ENCODE measurements at regions of chr19 and their contacts with region 1.

Region 1: GRCh38 chr19:49113762-49114629 is at the start of gene LIN7B:
- DNase-seq: peak; percentile 84
- H3K4me3 ChIP-seq: peak within 1 kb of the TSS; percentile 78
- H3K27ac ChIP-seq: peak within 1 kb of the TSS; percentile 85
- H3K4me1 ChIP-seq: peaks cover 13% of the 10 kb centered on the region
- H3K27me3 ChIP-seq: no peaks in the 10 kb centered on the region
- CTCF ChIP-seq: peak; percentile 32; the same call in 1 of the 2 replicates
- total RNA-seq, gene LIN7B: 19.9 and 24.3 TPM in 2 replicates

Region 2: DNA sequence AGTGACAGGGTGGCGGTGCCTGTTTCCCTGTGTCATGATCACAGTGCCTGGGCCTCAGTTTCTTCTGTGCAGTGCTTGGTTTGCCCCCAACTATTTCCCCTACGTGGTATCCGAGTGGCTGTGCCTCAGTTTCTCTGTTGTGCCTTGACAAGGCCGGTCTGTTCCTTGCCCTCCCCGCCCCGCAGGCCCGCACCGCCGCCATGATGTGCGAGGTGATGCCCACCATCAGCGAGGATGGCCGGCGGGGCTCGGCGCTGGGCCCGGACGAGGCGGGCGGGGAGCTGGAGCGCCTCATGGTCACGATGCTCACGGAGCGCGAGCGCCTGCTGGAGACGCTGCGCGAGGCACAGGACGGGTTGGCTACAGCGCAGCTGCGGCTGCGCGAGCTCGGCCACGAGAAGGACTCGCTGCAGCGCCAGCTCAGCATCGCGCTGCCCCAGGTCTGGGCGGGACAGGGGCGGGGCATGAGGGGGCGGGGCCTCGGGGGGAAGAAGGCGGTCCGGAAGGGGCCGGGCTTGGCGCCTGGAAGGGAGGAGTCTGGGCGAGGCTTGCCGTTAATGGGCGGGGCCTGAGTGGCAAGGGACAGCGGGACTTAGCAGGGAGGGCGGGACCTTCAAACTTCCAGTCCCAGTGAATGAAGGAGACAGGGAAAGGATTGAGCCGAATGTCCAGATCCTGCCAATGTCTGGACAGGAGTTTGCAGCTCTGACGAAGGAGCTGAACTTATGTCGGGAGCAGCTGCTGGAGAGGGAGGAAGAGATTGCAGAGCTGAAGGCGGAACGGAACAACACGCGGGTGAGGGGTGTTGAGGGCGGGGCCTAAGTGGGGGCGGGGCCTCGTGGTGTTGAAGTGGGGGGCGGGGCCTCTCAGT is 13.9 kb after region 1 on chr19:
- CTCF ChIA-PET with region 1: interaction called, 12 read pairs
- POLR2A ChIA-PET with region 1: no interaction called
- intact Hi-C with region 1: no loop called
- DNase-seq: peak; percentile 98
- H3K4me3 ChIP-seq: peak overlapping the region; percentile 49
- H3K27ac ChIP-seq: no peak overlapping the region
- H3K4me1 ChIP-seq: peaks cover 18% of the 10 kb centered on the region
- H3K27me3 ChIP-seq: no peaks in the 10 kb centered on the region
- CTCF ChIP-seq: no peak

Region 3: GRCh38 chr19:49210108-49210900 is 96.3 kb after region 1 on chr19:
- CTCF ChIA-PET with region 1: interaction called, 3 read pairs
- POLR2A ChIA-PET with region 1: no interaction called
- intact Hi-C with region 1: loop called (anchors 5 kb)
- DNase-seq: peak; percentile 96
- H3K4me3 ChIP-seq: peak overlapping the region; percentile 67
- H3K27ac ChIP-seq: peak overlapping the region; percentile 99
- H3K4me1 ChIP-seq: peaks cover 32% of the 10 kb centered on the region
- H3K27me3 ChIP-seq: no peaks in the 10 kb centered on the region
- CTCF ChIP-seq: 0 out of 2 replicates have a peak, but pooled peaks have one; percentile 12

Region 4: DNA sequence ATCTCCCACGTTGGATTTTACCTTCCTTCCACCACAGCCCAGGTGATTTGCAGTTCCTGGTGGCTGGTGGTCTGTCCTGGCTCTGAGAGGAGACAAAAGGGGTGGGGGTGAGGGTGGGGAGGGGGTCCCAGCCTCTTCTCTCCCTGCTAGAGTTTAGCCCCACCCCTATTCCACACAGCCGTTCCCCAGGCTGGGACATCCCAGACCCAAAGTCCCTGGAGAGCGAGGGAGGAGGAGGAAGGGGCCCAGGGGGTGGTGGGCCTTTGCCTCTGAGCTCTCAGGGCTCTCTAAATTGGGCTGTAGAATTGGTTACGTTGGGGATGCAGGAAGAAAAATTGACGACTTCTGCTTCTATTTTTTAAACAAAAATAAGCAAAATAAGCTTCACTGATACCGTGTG is 129.1 kb after region 1 on chr19:
- CTCF ChIA-PET with region 1: no interaction called
- POLR2A ChIA-PET with region 1: no interaction called
- intact Hi-C with region 1: no loop called
- DNase-seq: no peak
- H3K4me3 ChIP-seq: no peak overlapping the region
- H3K27ac ChIP-seq: no peak overlapping the region
- H3K4me1 ChIP-seq: no peaks in the 10 kb centered on the region
- H3K27me3 ChIP-seq: no peaks in the 10 kb centered on the region
- CTCF ChIP-seq: no peak

Region 5: GRCh38 chr19:49282184-49282583 is 168.2 kb after region 1 on chr19:
- CTCF ChIA-PET with region 1: no interaction called
- POLR2A ChIA-PET with region 1: no interaction called
- intact Hi-C with region 1: no loop called
- DNase-seq: no peak
- H3K4me3 ChIP-seq: no peak overlapping the region
- H3K27ac ChIP-seq: no peak overlapping the region
- H3K4me1 ChIP-seq: no peaks in the 10 kb centered on the region
- H3K27me3 ChIP-seq: no peaks in the 10 kb centered on the region
- CTCF ChIP-seq: no peak

Region 6: DNA sequence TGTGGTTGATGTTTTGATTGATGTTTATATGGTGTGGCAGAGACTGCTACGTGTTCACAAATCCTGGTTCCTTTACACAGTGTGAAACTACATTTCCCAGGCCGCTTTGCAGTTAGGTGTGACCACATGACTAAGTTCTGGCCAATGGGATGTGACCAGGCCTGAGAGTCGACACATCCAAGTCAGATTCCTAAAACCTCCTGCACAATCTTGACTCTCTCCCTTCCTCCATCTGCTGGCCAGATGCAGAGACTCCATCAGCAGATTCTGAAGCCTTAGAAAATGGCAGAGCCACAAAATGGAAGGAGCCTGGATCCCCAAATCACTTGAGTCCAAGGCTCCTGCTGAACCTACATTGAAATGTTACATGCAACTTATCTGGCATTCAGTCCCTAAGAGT is 233.8 kb after region 1 on chr19:
- CTCF ChIA-PET with region 1: no interaction called
- POLR2A ChIA-PET with region 1: no interaction called
- intact Hi-C with region 1: no loop called
- DNase-seq: peak; percentile 68
- H3K4me3 ChIP-seq: no peak overlapping the region
- H3K27ac ChIP-seq: no peak overlapping the region
- H3K4me1 ChIP-seq: no peaks in the 10 kb centered on the region
- H3K27me3 ChIP-seq: no peaks in the 10 kb centered on the region
- CTCF ChIP-seq: 0 out of 2 replicates have a peak, but pooled peaks have one; percentile 31

Region 7: DNA sequence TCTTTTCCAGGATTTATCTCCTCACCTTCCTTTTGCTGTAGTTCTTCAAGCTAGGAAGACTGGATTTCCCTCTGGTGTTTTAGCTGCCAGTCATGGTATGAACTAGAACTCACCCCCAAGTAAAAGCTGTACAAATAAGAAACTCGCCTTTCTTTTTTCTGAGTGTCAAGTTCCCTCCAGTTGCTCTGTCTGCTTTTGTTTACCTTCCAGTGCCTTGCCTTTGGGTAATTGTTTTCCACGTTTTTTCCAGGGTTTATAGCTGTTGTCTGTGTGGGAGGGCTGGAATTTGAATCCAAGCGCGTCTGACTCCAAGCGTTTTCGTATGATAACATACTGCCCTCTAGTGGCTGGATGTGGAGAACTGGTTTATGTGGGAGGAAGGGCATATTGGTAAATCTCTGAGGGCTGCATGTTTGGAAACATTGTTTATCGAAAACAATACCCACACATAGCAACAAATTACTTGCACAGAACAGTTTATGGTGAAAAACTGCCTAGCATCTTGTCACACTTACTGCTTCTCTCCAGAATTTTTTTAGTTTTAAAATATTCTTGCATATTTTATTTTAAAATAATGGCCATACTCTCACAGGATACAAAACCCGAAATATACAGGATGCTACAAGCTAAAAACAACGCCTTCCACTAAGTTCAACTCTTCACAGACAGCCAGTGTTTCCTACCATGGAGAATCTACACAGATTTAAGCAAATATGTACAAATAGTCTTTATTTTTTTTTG is 433.0 kb after region 1 on chr19:
- CTCF ChIA-PET with region 1: no interaction called
- POLR2A ChIA-PET with region 1: no interaction called
- intact Hi-C with region 1: no loop called
- DNase-seq: peak; percentile 95
- H3K4me3 ChIP-seq: no peak overlapping the region
- H3K27ac ChIP-seq: peak overlapping the region; percentile 14
- H3K4me1 ChIP-seq: peaks cover 4% of the 10 kb centered on the region
- H3K27me3 ChIP-seq: no peaks in the 10 kb centered on the region
- CTCF ChIP-seq: peak; percentile 86